ENCODE measurements at regions of chr1 and their contacts with region 1.

Region 1: DNA sequence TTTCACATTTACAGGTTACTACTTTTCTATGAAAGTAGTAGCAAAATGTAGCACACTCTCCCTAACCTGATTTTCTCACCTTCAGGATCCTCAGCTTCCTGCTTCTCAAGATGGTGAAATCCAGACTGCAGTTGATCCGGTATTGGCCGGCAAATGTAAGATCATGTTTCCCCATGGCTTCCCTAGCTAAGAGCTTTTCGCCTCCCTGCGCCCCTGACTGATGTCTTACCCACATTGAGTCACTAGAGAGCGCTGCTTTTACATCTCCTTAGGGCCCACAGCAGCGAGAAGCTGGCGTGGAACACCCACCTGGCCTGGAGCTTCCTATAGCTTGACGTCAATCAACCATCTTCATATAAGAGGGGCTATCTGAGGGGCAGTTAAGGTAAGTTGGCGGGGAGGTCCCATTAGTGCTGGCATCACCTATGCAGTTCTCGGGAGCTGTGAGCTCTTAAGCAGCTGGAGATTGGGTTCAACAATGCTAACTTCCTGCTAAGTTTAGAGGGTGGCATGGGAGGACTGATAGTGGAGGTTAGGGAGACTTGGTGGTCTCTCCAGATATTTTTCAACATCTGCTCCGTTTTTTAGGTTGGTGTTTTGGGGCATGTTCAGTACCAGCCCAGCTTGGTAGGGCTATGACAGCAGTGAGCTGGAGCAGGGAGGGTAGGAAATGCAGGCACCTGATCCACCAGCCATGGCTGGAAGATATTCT is 5.5 kb downstream of the PTPN7 start:
- DNase-seq: peak; percentile 56 to 75 (median 71)
- H3K4me3 ChIP-seq: no peak overlapping the region
- H3K27ac ChIP-seq: no peak overlapping the region
- H3K4me1 ChIP-seq: peaks cover 3 to 53% (median 46%) of the 10 kb centered on the region in 4 experiments
- H3K27me3 ChIP-seq: no peaks in the 10 kb centered on the region

Region 2: GRCh38 chr1:201702936-201703335 is 452.0 kb before region 1 on chr1:
- CTCF ChIA-PET with region 1: no interaction called
- POLR2A ChIA-PET with region 1: no interaction called
- DNase-seq: no peak
- H3K4me3 ChIP-seq: no peak overlapping the region
- H3K27ac ChIP-seq: no peak overlapping the region
- H3K4me1 ChIP-seq: peaks cover 0 to 6% (median 3%) of the 10 kb centered on the region in 4 experiments
- H3K27me3 ChIP-seq: no peaks in the 10 kb centered on the region

Region 3: DNA sequence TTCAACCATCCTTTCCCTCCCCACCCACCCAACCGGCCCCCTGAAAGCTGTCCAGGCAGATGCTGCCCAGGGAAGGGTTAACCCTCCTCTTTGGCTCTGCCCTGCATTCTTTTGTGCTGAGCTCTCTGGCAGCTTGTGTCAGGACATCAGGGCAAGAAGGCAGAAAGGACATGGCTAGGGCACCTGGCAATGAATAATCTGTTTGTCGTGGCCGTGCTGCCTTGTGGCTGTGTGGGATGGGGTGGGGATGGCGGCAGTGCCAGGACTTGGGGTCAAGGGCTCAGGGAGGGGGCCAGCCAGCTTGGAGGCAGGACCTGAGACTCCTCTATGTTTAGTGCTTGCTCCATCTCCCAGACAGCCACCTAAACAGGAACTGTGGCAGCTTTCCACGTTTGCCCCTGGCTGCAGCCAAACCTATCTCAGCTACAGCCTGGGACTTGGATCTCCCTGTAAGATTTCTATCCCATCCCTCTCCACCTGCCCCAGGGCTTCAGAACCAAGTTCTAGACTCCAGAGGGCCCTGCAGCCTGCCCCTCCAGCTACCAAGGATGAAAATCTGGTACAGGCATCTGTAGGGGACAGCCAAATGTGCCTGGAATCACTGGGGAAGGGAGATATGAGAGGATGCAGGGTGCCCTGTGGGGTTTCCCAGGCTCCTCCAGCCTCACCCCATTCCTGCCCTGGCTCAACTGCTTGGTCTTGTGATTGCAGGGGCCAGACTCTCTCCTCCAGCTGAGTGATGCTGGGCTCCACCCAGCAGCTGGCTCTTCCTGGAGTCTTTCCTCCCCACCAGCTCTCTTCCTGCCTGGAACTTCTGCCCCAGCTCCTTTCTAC is 41.9 kb before region 1 on chr1:
- CTCF ChIA-PET with region 1: no interaction called
- POLR2A ChIA-PET with region 1: no interaction called
- DNase-seq: no peak
- H3K4me3 ChIP-seq: no peak overlapping the region
- H3K27ac ChIP-seq: no peak overlapping the region
- H3K4me1 ChIP-seq: no peaks in the 10 kb centered on the region
- H3K27me3 ChIP-seq: no peaks in the 10 kb centered on the region

Region 4: DNA sequence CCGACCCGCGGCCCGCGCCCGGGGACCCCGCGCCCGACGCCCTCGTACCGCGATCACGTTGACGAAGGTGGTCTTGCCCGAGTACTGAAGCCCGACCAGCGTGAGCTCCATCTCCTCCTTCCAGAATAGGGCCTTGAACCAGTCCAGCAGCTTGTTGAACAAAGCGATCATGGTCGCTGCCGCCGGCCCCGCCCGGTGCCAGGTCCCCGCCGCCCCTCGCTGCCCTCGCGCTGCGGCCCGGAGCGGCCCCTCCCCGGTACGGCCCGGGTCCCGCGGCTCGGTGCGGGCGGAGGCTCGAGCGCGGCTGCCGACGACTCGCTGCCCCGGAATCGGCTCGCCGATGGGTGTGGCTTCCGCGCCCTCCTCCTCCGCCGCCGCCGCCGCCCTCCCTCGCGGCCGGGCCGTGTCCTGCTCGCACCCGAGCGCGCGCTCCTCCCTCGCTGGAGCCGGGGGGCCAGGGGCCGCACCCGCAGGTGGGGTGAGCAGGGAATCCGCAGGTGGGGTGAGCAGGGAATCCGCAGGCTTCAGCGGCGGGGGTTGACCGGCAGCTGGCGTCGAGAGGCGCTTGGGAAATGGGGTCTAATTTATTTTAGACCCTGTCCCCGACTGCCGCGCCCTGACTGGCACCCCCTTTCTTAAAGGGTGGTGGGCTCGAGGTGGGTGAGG is 10.4 kb before region 1 on chr1 and contains the start of gene ARL8A:
- CTCF ChIA-PET with region 1: interaction called, 20 read pairs
- POLR2A ChIA-PET with region 1: interaction called, 8 read pairs
- DNase-seq: peak in 1 of 3 donors; percentile 63
- H3K4me3 ChIP-seq: peak within 1 kb of the TSS; percentile 75 to 90 (median 84)
- H3K27ac ChIP-seq: peak within 1 kb of the TSS; percentile 77 to 88
- H3K4me1 ChIP-seq: peaks cover 1 to 37% (median 23%) of the 10 kb centered on the region in 4 experiments
- H3K27me3 ChIP-seq: no peaks in the 10 kb centered on the region

Region 5: DNA sequence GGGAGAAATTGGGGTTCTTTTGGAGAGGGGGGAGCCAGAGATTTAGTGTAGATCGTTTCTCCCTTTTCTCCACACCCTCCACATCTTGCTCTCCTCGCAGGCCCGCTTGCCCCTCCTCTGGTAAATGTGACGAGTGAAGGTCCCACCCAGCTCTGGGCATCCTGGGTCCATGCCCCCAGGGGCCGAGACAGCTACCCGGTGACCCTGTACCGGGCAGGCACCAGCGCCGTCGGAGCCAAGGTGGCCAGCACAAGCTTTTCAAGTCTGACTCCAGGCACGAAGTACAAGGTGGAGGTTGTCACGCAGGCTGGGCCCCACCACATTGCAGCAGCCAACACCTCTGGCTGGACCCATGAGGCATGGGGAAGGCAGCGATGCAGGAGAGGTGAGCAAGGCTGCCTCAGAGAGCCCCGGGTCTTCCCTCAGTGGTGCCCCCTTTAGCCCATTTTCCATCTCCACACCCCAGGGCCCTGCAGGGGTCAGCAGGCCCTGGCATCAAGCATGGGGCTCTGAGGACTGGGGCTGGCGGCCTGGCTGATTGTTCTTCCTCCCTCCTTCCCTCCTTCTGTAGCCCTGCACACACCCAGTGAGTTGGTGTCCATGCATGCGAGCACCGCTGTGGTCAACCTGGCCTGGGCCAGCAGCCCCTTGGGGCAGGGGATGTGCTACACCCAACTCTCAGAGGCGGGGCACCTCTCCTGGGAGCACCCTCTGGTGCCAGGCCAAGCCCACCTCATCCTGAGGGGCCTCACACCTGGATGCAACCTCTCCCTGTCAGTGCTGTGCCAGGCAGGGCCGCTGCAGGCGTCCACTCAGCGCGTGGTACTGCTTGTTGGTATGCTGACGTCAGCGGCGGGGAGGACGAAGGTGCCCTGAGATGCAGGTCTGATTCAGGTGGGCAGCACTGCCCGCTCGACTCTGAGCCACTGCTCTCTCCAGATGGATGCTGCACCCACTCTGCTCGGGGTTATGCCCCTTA is 22.3 kb after region 1 on chr1:
- CTCF ChIA-PET with region 1: interaction called, 32 read pairs
- POLR2A ChIA-PET with region 1: no interaction called
- DNase-seq: no peak
- H3K4me3 ChIP-seq: no peak overlapping the region
- H3K27ac ChIP-seq: no peak overlapping the region
- H3K4me1 ChIP-seq: no peaks in the 10 kb centered on the region
- H3K27me3 ChIP-seq: no peaks in the 10 kb centered on the region

Region 6: GRCh38 chr1:202184750-202185460 is 30.0 kb after region 1 on chr1:
- CTCF ChIA-PET with region 1: interaction called, 18 read pairs
- POLR2A ChIA-PET with region 1: no interaction called
- DNase-seq: peak; percentile 82 to 87 (median 86)
- H3K4me3 ChIP-seq: no peak overlapping the region
- H3K27ac ChIP-seq: no peak overlapping the region
- H3K4me1 ChIP-seq: peaks cover 0 to 3% (median 1%) of the 10 kb centered on the region in 4 experiments
- H3K27me3 ChIP-seq: no peaks in the 10 kb centered on the region

Measured in common myeloid progenitor, CD34-positive (primary cell).